Thyroid gland (tissue), 4 donors: ENCODE measurements at regions of chr1 and their contacts with region 1.

Region 1: DNA sequence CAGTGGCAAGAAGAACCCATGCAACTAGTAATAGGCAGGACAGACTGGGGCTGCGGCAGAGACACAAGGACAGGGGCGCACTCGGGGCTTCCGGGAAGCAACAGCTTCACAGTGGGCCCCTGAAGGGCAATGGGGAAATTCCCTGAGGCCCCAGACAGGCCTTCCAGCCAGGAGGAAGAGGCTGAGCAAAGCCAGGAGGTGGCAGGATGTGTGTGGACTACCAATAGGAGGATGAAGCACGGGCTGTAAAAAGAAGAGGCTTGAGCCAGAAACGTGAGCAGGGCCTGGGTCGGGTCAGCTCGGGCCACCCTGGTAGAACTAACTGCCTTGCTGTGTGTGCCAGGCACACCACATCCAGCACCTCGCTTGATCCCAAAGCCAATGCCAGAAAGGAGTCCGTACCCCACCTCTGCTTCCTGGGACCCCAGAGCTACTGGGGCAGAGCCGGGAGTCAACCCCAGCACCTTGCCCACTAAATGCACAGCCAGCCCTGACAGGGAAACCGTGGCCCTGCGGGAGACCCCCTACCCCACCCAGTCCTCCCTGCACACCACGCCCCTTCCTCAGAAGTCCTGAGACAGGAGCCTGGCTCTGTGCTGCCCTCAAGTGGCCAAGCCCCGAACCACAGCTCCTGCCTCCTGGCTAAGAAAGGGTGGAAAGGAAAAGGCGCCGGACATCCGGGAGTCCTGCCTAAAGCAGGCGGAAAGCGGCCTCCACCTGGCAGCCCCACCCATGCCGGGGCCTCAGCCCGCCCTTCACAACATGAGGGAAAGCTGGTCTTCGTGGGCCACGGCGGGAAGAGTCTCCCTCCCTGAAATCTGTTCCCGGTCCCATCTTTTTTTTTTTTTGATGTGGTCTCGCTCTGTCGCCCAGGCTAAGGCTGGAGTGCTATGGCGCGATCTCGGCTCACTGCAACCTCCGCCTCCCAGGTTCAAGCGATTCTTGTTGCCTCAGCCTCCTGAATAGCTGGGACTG is 33.7 kb downstream of the TTC39A start:
- DNase-seq: peak; percentile 86
- H3K4me3 ChIP-seq: peak overlapping the region in 2 of 3 donors; percentile 28 to 33
- H3K27ac ChIP-seq: peak overlapping the region in 1 of 3 donors; percentile 46
- H3K4me1 ChIP-seq: peaks cover 6 to 7% of the 10 kb centered on the region in 2 donors
- H3K27me3 ChIP-seq: no peaks in the 10 kb centered on the region
- CTCF ChIP-seq: peak; percentile 85 to 98 (median 93)
- POLR2A ChIP-seq: peak in 1 of 2 donors; percentile 5

Region 2: DNA sequence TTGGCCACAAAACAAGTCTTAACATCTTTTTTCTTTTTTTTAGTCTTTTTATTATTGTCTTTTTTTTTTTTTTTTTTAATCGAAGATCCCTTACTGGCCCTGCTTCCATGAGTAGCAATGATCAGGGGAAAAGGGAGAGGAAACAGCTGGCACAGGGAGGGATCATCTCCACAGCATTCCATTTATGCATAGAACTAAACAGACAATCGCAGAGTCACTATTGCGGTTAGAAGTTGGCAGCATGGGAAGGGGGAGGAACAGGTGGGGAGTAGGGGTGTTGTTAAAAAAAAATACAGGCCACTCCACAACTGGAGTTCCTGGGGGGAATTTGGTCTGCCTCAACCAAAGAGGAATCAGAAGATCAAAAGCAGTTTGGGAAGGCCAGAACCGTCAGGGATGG is 139.3 kb before region 1 on chr1:
- intact Hi-C with region 1: no loop called
- DNase-seq: no peak
- H3K4me3 ChIP-seq: no peak overlapping the region
- H3K27ac ChIP-seq: no peak overlapping the region
- H3K4me1 ChIP-seq: no peaks in the 10 kb centered on the region
- H3K27me3 ChIP-seq: no peaks in the 10 kb centered on the region
- CTCF ChIP-seq: no peak
- POLR2A ChIP-seq: no peak

Region 3: DNA sequence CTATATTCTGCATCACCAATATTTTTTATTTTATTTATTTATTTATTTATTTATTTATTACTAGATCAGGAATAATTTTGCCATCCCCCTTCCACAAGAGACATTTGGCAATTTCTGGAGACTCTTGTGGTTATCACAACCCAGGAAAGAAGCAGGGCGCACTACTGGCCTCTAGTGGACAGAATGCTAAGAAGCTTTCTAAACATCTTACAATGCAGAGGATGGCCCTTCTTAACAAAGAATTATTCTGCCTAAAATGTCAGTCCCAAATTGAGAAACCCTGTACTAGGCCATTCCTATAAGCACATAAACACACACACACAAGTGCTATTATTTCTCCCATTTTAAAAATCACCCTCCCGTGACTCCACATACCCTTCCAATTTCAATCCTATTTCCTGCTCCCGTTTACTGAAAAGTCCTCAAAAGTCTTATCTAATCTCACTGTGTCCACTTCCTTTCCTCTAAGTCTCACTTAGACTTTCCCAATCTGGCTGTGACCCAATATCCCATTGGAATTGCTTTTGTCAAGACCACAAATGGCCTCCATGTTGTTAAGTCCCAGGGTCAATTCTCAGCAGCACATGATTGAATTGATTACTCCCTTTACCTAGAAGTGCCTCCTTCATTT is 104.3 kb before region 1 on chr1:
- intact Hi-C with region 1: loop called (anchors 5 kb)
- DNase-seq: peak; percentile 71 to 73
- H3K4me3 ChIP-seq: no peak overlapping the region
- H3K27ac ChIP-seq: no peak overlapping the region
- H3K4me1 ChIP-seq: no peaks in the 10 kb centered on the region
- H3K27me3 ChIP-seq: no peaks in the 10 kb centered on the region
- CTCF ChIP-seq: peak; percentile 48 to 92 (median 64)
- POLR2A ChIP-seq: no peak

Region 4: DNA sequence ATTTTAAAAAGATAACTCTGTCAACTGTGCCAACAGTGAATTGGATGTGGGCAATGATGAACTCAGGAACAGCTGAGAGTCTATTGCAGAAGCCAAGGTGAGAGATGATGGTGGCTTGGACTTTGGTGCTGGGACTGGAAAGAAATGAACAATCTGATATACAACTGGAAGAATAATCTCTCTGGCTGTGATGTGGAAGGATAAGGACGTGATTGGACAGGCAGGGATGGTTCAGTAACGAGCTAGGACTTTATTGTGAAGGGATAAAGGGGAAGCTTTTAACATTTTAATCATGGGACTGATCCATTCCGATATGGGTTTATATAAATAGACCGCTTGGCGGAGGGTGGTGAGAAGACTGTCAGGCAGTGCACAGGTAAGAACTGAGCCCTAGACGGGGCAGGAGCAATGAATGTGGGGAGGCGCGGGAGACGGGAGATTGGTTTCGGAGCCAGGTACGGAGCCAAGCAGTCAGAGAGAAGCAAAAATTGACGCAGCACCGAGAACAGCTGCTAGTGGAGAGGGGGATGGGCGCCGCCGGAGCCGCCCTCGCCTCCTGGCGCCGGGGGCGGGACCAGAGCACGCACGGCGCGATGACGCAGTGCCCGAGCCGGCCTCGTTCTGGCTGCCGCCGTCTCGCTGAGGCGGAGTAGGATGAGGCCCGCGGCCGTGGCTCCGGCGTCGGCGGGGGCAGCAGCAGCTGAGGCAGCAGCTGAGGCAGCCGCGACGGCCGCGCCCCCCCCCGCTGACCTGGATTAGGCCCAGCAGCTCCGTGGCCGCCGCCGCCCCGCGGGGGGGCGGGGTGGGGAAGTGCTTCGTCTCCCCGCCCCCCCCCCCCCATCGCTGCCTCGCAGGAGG is 60.8 kb before region 1 on chr1 and contains the start of gene RNF11:
- intact Hi-C with region 1: loop called (anchors 10 kb)
- DNase-seq: peak; percentile 94 to 96
- H3K4me3 ChIP-seq: peak within 1 kb of the TSS; percentile 44 to 95 (median 90)
- H3K27ac ChIP-seq: peak within 1 kb of the TSS; percentile 94 to 97 (median 97)
- H3K4me1 ChIP-seq: peaks cover 27 to 39% of the 10 kb centered on the region in 2 donors
- H3K27me3 ChIP-seq: no peaks in the 10 kb centered on the region
- CTCF ChIP-seq: peak in 1 of 6 experiments; percentile 21
- POLR2A ChIP-seq: peak; percentile 97 to 99
- total RNA-seq, gene RNF11: 113 to 134 (median 115) TPM

Region 5: DNA sequence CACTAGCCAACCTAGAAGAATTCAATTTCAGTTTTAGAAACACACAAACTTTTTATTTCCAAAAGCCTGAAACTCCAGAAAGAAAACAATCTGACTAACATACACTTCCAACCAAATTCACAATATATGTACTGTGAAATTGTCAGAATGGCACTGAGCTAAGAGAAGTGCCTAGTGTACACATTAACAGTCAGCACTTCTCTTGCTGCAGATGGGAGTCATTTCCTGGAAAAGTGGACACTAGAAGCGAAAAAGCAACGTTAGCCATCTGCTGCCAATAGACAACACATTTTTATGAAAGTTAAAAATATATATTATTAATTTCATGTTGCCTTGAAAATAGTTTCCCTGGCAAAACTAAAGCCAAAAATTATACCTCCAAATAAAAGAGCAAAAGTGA is 156.3 kb after region 1 on chr1:
- intact Hi-C with region 1: no loop called
- DNase-seq: no peak
- H3K4me3 ChIP-seq: no peak overlapping the region
- H3K27ac ChIP-seq: no peak overlapping the region
- H3K4me1 ChIP-seq: no peaks in the 10 kb centered on the region
- H3K27me3 ChIP-seq: no peaks in the 10 kb centered on the region
- CTCF ChIP-seq: no peak
- POLR2A ChIP-seq: no peak